Esophagus muscularis mucosa (tissue), 4 donors: ENCODE measurements at regions of chr3 and their contacts with region 1.

Region 1: DNA sequence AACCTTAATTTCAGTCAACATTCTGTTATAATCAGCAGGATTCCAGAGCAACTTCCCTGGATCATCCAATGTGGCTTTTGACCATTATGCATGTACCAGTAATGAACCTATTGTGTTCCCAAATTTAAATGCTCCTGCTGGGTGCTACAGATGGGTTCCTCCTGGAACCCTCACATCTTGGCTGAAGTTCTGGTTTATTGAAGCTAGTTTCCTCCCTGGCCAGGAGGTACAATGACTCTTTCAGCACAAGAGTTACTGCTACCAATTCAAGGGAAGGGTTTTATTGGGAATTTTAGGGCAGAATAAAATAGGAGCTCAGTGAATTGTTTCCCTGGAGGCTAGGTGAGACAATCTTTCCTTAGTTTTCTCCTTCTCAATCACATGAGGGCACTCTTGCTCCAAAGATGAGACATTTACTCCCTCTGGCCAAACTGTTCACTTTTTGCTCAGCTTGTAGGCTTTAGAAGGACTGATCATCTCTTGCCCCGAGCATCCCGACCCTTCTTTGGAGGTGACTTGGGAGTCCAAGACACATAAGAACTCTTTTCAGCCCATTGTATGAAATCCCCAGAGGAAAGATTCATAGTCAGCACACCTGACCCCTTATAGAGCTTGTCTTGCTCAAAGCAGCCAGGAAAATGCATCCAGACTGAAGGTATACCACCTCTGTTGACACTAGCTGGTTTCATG is 8.8 kb upstream of the NPHP3 start:
- DNase-seq: no peak
- H3K4me3 ChIP-seq: no peak overlapping the region
- H3K27ac ChIP-seq: no peak overlapping the region
- H3K4me1 ChIP-seq: peaks cover 0 to 14% (median 6%) of the 10 kb centered on the region in 4 donors
- H3K27me3 ChIP-seq: no peaks in the 10 kb centered on the region
- CTCF ChIP-seq: peak; percentile 54 to 58 (median 54)
- EP300 ChIP-seq: no peak
- POLR2A ChIP-seq: no peak

Region 2: GRCh38 chr3:132641837-132642538 is 89.0 kb before region 1 on chr3:
- intact Hi-C with region 1: no loop called
- DNase-seq: no peak
- H3K4me3 ChIP-seq: no peak overlapping the region
- H3K27ac ChIP-seq: no peak overlapping the region
- H3K4me1 ChIP-seq: no peaks in the 10 kb centered on the region
- H3K27me3 ChIP-seq: no peaks in the 10 kb centered on the region
- CTCF ChIP-seq: peak; percentile 63 to 82 (median 73)
- EP300 ChIP-seq: no peak
- POLR2A ChIP-seq: no peak

Region 3: GRCh38 chr3:133040696-133041523 is 309.9 kb after region 1 on chr3:
- intact Hi-C with region 1: loop called (anchors 2 kb)
- DNase-seq: no peak
- H3K4me3 ChIP-seq: peak overlapping the region in 3 of 4 donors; percentile 27 to 32 (median 28)
- H3K27ac ChIP-seq: peak overlapping the region; percentile 63 to 83 (median 68)
- H3K4me1 ChIP-seq: peaks cover 13 to 59% (median 56%) of the 10 kb centered on the region in 4 donors
- H3K27me3 ChIP-seq: peaks cover 0 to 16% (median 2%) of the 10 kb centered on the region in 4 donors
- CTCF ChIP-seq: peak; percentile 78 to 80 (median 80)
- EP300 ChIP-seq: no peak
- POLR2A ChIP-seq: no peak

Region 4: GRCh38 chr3:133384331-133385027 is 653.4 kb after region 1 on chr3:
- intact Hi-C with region 1: loop called (anchors 2 kb)
- DNase-seq: no peak
- H3K4me3 ChIP-seq: no peak overlapping the region
- H3K27ac ChIP-seq: no peak overlapping the region
- H3K4me1 ChIP-seq: peaks cover 0 to 23% (median 14%) of the 10 kb centered on the region in 4 donors
- H3K27me3 ChIP-seq: no peaks in the 10 kb centered on the region
- CTCF ChIP-seq: peak; percentile 83 to 85 (median 84)
- EP300 ChIP-seq: no peak
- POLR2A ChIP-seq: no peak

Region 5: GRCh38 chr3:133426721-133427120 is 695.7 kb after region 1 on chr3:
- intact Hi-C with region 1: loop called (anchors 1 kb)
- DNase-seq: no peak
- H3K4me3 ChIP-seq: no peak overlapping the region
- H3K27ac ChIP-seq: no peak overlapping the region
- H3K4me1 ChIP-seq: peaks cover 0 to 9% (median 8%) of the 10 kb centered on the region in 4 donors
- H3K27me3 ChIP-seq: peaks cover 0 to 10% (median 0%) of the 10 kb centered on the region in 4 donors
- CTCF ChIP-seq: no peak
- EP300 ChIP-seq: no peak
- POLR2A ChIP-seq: no peak